ENCODE measurements at regions of chr13 and their contacts with region 1.

Region 1: DNA sequence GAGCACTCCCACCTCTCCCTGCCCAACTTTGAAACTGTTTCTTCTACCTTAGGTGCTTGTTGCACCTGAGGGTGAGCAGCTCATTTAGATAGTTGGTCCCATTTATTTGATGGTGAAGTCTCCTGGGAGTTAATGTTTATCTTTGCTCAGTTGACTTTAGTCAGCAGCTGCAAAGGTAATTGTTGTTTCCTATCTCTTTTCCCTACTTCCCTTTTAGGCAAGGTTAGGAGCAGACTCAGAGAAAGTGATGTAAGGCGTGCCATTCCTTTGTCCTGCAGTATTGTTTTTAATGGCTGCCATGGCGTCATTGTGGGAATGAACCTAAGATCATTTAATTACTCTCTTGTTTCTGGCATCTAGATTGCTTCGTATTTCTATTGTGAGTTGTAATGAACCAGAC is 11.6 kb downstream of the AKAP11 start:
- DNase-seq: no peak
- H3K4me3 ChIP-seq: no peak overlapping the region
- H3K27ac ChIP-seq: no peak overlapping the region
- H3K4me1 ChIP-seq: peaks cover 0 to 10% (median 6%) of the 10 kb centered on the region in 4 experiments; a peak in 4 of 7 replicates
- H3K27me3 ChIP-seq: no peaks in the 10 kb centered on the region
- CTCF ChIP-seq: no peak
- EP300 ChIP-seq: no peak
- POLR2A ChIP-seq: no peak
- RAD21 ChIP-seq: no peak

Region 2: DNA sequence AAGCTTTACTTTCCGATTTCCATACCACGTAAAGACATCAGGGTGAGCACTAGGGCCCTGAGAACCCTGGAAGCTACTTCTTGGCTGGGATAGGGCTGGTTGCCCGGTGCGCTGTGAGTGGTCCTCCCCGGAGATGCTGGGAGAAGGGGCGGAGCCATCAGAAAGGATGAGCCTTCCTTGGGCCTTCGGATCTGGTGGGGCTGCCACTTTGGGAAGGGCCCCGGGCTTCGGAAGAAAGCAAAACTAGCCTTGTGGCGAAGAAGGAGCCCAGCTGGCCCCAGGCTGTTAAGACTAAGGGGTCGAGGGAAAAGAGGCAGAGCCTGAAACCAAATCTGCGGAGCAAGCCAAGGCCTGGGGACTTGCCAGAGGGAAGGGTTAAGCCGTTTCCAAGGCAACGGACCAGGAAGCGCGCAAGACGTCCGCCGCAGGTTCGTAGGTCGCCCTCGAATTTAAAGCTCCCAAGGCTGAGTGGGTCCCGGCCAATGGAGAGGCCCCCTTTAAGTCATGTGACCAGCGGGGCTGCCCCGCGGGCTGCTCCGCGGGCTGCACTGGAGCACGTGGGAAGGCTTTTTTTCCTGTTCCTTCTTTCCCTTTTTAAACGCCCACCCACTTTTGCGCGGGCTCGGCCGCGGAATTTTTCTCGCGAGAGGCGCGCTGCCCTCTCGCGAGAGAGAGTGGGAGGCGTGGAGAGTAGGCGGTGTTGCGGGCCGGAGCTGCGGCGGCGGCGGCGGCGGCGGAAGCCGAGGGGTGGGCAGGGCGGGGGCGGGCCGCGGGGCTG is 12.0 kb before region 1 on chr13:
- CTCF ChIA-PET with region 1: no interaction called
- POLR2A ChIA-PET with region 1: interaction called, 12 read pairs
- DNase-seq: peak; percentile 89 to 96
- H3K4me3 ChIP-seq: peak overlapping the region; percentile 62 to 75 (median 68)
- H3K27ac ChIP-seq: peak overlapping the region; percentile 83; the same call in 1 of the 2 replicates
- H3K4me1 ChIP-seq: peaks cover 0 to 9% (median 2%) of the 10 kb centered on the region in 4 experiments; a peak in 2 of 7 replicates
- H3K27me3 ChIP-seq: no peaks in the 10 kb centered on the region
- CTCF ChIP-seq: no peak
- EP300 ChIP-seq: no peak
- POLR2A ChIP-seq: peak in 1 of 2 experiments; percentile 69; a peak in 2 of 3 replicates
- RAD21 ChIP-seq: no peak